CD8-positive, alpha-beta T cell (primary cell): ENCODE measurements at regions of chr18 and their contacts with region 1.

Region 1: GRCh38 chr18:54269893-54270844 is 852 bp downstream of the POLI start:
- DNase-seq: peak in 5 of 9 experiments; percentile 23 to 63 (median 49)
- ATAC-seq: peak; percentile 31
- H3K4me3 ChIP-seq: peak overlapping the region; percentile 59 to 94
- H3K4me3 Mint-ChIP-seq: peak overlapping the region; percentile 95
- H3K27ac ChIP-seq: peak overlapping the region; percentile 87 to 89
- H3K27ac Mint-ChIP-seq: peak overlapping the region; percentile 97
- H3K4me1 ChIP-seq: peaks cover 10% of the 10 kb centered on the region
- H3K4me1 Mint-ChIP-seq: peaks cover 32% of the 10 kb centered on the region
- H3K27me3 ChIP-seq: no peaks in the 10 kb centered on the region
- H3K27me3 Mint-ChIP-seq: no peaks in the 10 kb centered on the region
- CTCF ChIP-seq: peak; percentile 59

Region 2: DNA sequence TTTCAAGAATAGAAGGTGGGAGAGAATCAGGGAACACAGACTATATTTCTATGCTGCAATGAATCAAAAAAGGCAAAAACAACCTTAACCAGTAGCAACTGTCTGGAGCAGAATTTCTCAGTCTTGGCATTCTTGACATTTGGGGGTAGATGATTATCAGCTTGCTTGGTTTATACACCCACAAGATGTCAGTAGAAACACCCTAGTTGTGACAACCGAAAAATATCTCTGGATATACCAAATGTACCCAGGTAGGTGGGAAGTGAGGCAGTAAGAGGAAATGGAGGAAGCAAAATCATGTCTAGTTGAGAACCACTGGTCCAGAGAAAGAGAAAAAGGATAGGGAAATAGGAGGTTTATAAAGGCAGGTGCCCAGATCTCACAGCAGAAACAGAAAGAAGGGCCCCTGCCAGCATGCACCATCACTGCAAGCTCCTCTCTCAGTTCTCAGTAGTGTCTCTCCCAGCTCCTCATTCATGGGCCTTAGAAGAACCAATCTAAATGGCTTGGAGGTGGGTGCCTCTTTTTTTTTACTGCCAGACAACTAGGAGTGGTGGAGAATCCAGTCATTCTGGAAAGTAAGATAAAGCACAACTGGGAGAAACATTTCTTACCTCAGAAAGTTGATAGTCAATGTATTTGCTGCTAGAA is 96.1 kb before region 1 on chr18:
- CTCF ChIA-PET with region 1: no interaction called
- POLR2A ChIA-PET with region 1: no interaction called
- intact Hi-C with region 1: loop called in 1 of 2 experiments (anchors 5 kb)
- DNase-seq: peak in 1 of 9 experiments; percentile 16
- ATAC-seq: no peak
- H3K4me3 ChIP-seq: no peak overlapping the region
- H3K4me3 Mint-ChIP-seq: no peak overlapping the region
- H3K27ac ChIP-seq: no peak overlapping the region
- H3K27ac Mint-ChIP-seq: peak overlapping the region; percentile 6
- H3K4me1 ChIP-seq: no peaks in the 10 kb centered on the region
- H3K4me1 Mint-ChIP-seq: peaks cover 18% of the 10 kb centered on the region
- H3K27me3 ChIP-seq: no peaks in the 10 kb centered on the region
- H3K27me3 Mint-ChIP-seq: no peaks in the 10 kb centered on the region
- CTCF ChIP-seq: no peak

Region 3: GRCh38 chr18:54247511-54248175 is 22.5 kb before region 1 on chr18:
- CTCF ChIA-PET with region 1: no interaction called
- POLR2A ChIA-PET with region 1: interaction called, 7 read pairs
- intact Hi-C with region 1: loop called in 1 of 2 experiments (anchors 2 kb)
- DNase-seq: no peak
- ATAC-seq: no peak
- H3K4me3 ChIP-seq: no peak overlapping the region
- H3K4me3 Mint-ChIP-seq: peak overlapping the region; percentile 59
- H3K27ac ChIP-seq: peak overlapping the region in 1 of 2 experiments; percentile 24
- H3K27ac Mint-ChIP-seq: peak overlapping the region; percentile 90
- H3K4me1 ChIP-seq: peaks cover 16% of the 10 kb centered on the region
- H3K4me1 Mint-ChIP-seq: peaks cover 18% of the 10 kb centered on the region
- H3K27me3 ChIP-seq: no peaks in the 10 kb centered on the region
- H3K27me3 Mint-ChIP-seq: no peaks in the 10 kb centered on the region
- CTCF ChIP-seq: no peak

Region 4: DNA sequence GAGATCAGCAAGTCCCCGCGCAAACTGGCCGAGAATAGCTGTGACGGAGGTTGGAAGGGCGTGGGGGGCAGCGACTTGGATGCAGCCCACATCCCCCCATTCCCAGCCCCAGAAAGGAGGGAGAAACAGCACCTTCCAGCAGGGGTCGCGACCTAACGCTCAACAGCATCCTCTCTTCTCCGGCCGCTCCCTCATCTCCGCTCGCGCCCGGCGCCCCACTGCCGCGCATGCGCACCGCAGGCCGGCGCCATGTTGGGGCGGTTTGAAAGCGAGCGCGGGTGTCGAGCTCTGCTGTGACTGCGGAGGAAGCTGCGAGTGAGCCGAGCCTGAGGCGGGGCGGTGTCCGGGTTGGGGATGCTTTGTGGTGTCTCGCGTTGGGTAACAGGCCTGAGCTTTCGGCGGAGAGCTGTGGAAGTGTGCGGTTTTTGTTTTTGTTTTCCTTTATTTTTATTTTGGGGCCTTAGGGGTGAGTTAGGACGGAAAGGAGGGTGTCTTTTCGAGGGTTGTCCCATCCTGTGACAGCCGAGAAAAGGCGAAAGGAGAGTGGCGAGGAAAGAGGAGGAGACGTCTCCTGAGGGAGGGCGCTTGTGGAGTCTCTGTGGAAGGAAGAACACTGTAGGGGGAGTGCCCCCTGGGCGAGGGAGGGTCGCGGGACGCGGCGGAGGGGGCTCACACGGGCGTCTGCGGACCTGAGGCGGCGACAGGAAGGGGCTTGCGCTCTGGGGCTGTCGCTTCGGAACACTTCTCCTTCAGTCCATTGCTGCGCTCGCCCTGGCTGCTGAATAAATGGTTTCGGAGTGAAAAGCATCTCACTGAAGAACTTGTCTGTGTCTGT is 87.7 kb after region 1 on chr18 and contains the starts of genes C18orf54 and STARD6:
- CTCF ChIA-PET with region 1: interaction called, 8 read pairs
- POLR2A ChIA-PET with region 1: interaction called, 4 read pairs
- intact Hi-C with region 1: loop called (anchors 1 kb)
- DNase-seq: peak; percentile 76 to 97 (median 88)
- ATAC-seq: peak; percentile 93
- H3K4me3 ChIP-seq: peak within 1 kb of the TSS; percentile 67 to 79
- H3K4me3 Mint-ChIP-seq: peak within 1 kb of the TSS; percentile 100
- H3K27ac ChIP-seq: peak within 1 kb of the TSS; percentile 57 to 75
- H3K27ac Mint-ChIP-seq: peak within 1 kb of the TSS; percentile 94
- H3K4me1 ChIP-seq: peaks cover 11% of the 10 kb centered on the region
- H3K4me1 Mint-ChIP-seq: peaks cover 18% of the 10 kb centered on the region
- H3K27me3 ChIP-seq: peaks cover 0 to 2% of the 10 kb centered on the region in 2 experiments
- H3K27me3 Mint-ChIP-seq: no peaks in the 10 kb centered on the region
- CTCF ChIP-seq: peak; percentile 63
- total RNA-seq, gene C18orf54: 0.33 to 0.42 TPM
- total RNA-seq, gene STARD6: not detected

Region 5: DNA sequence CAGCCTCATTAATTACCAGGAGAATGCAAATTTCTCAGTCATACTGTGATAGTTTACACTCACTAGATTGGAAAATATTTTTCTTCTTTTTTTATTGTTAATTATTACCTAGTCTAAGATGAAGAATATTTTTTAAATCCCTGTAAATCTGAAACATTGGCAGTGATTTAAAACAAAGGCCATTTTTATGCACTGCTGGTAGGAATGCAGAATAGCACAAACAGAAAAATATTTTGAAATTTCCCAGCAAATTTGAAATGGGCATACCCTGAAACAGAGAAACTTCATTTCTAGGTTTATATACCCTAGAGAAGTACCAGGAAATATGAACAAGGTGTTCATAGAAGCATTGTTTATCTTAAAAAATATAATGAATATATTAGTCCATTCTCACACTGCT is 351.9 kb after region 1 on chr18:
- CTCF ChIA-PET with region 1: no interaction called
- POLR2A ChIA-PET with region 1: no interaction called
- intact Hi-C with region 1: no loop called
- DNase-seq: no peak
- ATAC-seq: no peak
- H3K4me3 ChIP-seq: no peak overlapping the region
- H3K4me3 Mint-ChIP-seq: no peak overlapping the region
- H3K27ac ChIP-seq: no peak overlapping the region
- H3K27ac Mint-ChIP-seq: no peak overlapping the region
- H3K4me1 ChIP-seq: no peaks in the 10 kb centered on the region
- H3K4me1 Mint-ChIP-seq: no peaks in the 10 kb centered on the region
- H3K27me3 ChIP-seq: no peaks in the 10 kb centered on the region
- H3K27me3 Mint-ChIP-seq: peaks cover 9% of the 10 kb centered on the region
- CTCF ChIP-seq: no peak